ENCODE measurements at regions of chr6 and their contacts with region 1.

Region 1: GRCh38 chr6:158703111-158703831 is 53.4 kb downstream of the SYTL3 start:
- DNase-seq: no peak
- H3K4me3 Mint-ChIP-seq: no peak overlapping the region
- H3K27ac Mint-ChIP-seq: peak overlapping the region; percentile 54
- H3K4me1 Mint-ChIP-seq: peaks cover 18% of the 10 kb centered on the region
- H3K27me3 Mint-ChIP-seq: no peaks in the 10 kb centered on the region

Region 2: GRCh38 chr6:158686791-158687381 is 16.4 kb before region 1 on chr6:
- CTCF ChIA-PET with region 1: interaction called, 27 read pairs
- POLR2A ChIA-PET with region 1: no interaction called
- DNase-seq: peak; percentile 62
- H3K4me3 Mint-ChIP-seq: no peak overlapping the region
- H3K27ac Mint-ChIP-seq: peak overlapping the region; percentile 75
- H3K4me1 Mint-ChIP-seq: peaks cover 55% of the 10 kb centered on the region
- H3K27me3 Mint-ChIP-seq: no peaks in the 10 kb centered on the region

Region 3: GRCh38 chr6:158853072-158853871 is 150.0 kb after region 1 on chr6:
- CTCF ChIA-PET with region 1: no interaction called
- POLR2A ChIA-PET with region 1: no interaction called
- DNase-seq: peak; percentile 93
- H3K4me3 Mint-ChIP-seq: no peak overlapping the region
- H3K27ac Mint-ChIP-seq: no peak overlapping the region
- H3K4me1 Mint-ChIP-seq: peaks cover 33% of the 10 kb centered on the region
- H3K27me3 Mint-ChIP-seq: no peaks in the 10 kb centered on the region

Measured in activated CD4-positive, alpha-beta T cell treated with anti-CD3 and anti-CD28 coated beads, Interleukin-2, amount 10 ng/mL, durations not matched to agents 7 days and 5 days (primary cell).